ENCODE measurements at regions of chr14 and their contacts with region 1.

Region 1: GRCh38 chr14:50714450-50715073 is 46.5 kb upstream of the SAV1 start:
- DNase-seq: peak in 1 of 2 donors; percentile 37
- ATAC-seq: peak in 6 of 8 donors; percentile 20 to 83 (median 63)
- H3K4me3 ChIP-seq: no peak overlapping the region
- H3K27ac ChIP-seq: no peak overlapping the region
- H3K4me1 ChIP-seq: no peaks in the 10 kb centered on the region
- H3K27me3 ChIP-seq: no peaks in the 10 kb centered on the region
- CTCF ChIP-seq: peak in 8 of 9 donors; percentile 31 to 86 (median 66)

Region 2: DNA sequence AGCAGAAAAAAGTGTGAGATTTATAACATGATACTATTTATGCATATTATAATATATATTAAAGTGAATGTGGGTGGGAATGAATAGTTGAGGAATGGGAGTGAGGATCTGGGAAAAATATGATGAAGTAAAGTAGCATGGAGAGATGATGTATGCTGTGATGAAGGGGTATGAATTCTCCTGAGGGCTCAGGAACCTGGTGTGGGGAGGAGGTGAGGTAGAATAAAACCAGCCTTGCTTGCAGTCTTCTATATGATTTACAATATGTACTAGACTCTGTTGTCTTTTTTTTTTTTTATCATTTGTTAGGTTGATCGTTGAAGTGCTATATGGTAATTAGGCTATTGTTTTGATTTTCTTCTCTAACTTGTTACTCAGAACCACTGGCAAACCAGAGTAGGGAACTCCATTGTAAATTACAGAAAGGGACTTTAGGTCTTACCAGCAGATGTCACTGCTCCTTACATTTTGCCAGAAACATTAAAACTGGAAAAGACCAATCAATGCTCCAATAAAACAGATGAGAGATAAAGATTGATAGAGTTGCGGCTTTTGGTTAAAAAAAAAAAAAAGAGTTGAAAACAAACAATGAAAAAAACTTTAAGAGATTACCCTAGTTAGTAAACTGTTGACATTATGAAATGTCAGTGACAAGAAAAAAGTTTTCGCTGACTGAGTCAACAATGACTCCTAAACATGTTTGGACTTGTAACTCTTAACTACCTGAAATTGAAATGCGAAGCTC is 114.7 kb before region 1 on chr14:
- intact Hi-C with region 1: loop called in 6 of 10 experiments (anchors 2 to 10 kb)
- DNase-seq: no peak
- ATAC-seq: peak in 1 of 8 donors; percentile 31
- H3K4me3 ChIP-seq: no peak overlapping the region
- H3K27ac ChIP-seq: no peak overlapping the region
- H3K4me1 ChIP-seq: no peaks in the 10 kb centered on the region
- H3K27me3 ChIP-seq: no peaks in the 10 kb centered on the region
- CTCF ChIP-seq: peak; percentile 15 to 76 (median 62)

Region 3: DNA sequence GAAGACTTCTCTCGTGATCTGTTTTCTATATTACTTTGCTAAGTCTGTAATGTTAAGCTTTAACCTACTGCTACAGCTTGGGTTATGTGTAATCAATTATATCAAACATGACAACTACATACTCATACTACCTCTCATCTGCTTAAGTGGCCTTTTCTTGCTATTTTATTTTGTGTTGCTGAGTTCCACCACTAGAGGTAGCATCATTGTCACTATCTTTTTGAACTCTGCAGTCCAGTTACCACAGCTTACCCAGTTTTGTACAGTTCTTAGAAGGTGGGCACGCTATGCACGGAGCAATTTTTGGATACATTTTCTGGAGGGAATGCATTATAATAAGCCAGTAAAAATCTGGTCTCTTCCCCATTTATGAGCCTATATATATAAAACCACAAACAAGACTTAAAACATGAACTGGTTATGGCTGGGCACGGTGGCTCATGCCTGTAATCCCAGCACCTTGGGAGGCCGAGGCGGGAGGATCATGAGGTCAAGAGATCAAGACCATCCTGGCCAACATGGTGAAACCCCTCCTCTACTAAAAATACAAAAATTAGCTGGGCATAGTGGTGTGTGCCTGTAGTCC is 94.9 kb before region 1 on chr14:
- intact Hi-C with region 1: loop called in 8 of 10 experiments (anchors 2 to 5 kb)
- DNase-seq: no peak
- ATAC-seq: peak in 4 of 8 donors; percentile 24 to 58 (median 48)
- H3K4me3 ChIP-seq: no peak overlapping the region
- H3K27ac ChIP-seq: no peak overlapping the region
- H3K4me1 ChIP-seq: peaks cover 0 to 8% (median 0%) of the 10 kb centered on the region in 9 donors
- H3K27me3 ChIP-seq: no peaks in the 10 kb centered on the region
- CTCF ChIP-seq: peak; percentile 32 to 72 (median 63)